ENCODE measurements at regions of chr7 and their contacts with region 1.

Region 1: GRCh38 chr7:135281363-135281949 is 47.8 kb downstream of the STRA8 start:
- DNase-seq: peak; percentile 79
- ATAC-seq: peak; percentile 99
- H3K4me3 ChIP-seq: no peak overlapping the region
- H3K27ac ChIP-seq: no peak overlapping the region
- H3K4me1 ChIP-seq: no peaks in the 10 kb centered on the region; a peak in 1 of 4 replicates
- H3K27me3 ChIP-seq: peaks cover 5% of the 10 kb centered on the region
- CTCF ChIP-seq: peak; percentile 96 to 100 (median 99)
- POLR2A ChIP-seq: no peak
- RAD21 ChIP-seq: peak; percentile 100

Region 2: DNA sequence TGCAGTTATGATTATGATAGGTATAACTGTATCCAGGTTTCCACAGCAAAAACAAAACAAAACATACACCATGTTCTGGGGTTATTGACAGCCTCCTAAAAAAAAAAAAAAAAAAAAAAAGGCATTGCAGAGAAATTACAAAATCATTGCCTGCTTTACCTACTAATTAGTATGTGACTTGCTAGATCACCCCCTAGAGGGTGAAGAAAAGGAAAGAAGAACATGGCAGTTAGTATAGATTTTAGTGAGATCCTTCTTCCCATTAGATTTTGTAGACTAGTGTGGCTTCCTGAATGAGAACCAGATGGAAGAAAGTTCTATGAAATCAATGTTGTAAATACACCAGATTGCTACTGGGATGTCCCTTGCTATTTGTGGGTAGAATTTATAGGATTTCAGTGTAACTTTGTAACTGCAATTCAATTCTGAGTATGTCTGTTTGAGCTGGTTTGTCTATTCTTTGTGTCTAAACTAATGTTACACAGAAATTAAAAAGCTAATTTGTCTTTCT is 319.1 kb before region 1 on chr7:
- CTCF ChIA-PET with region 1: no interaction called
- POLR2A ChIA-PET with region 1: no interaction called
- RAD21 ChIA-PET with region 1: no interaction called
- intact Hi-C with region 1: no loop called
- DNase-seq: no peak
- ATAC-seq: no peak
- H3K4me3 ChIP-seq: no peak overlapping the region
- H3K27ac ChIP-seq: no peak overlapping the region
- H3K4me1 ChIP-seq: no peaks in the 10 kb centered on the region
- H3K27me3 ChIP-seq: no peaks in the 10 kb centered on the region
- CTCF ChIP-seq: peak in 1 of 3 experiments; percentile 16; a peak in 1 of 6 replicates
- POLR2A ChIP-seq: no peak
- RAD21 ChIP-seq: 0 out of 2 replicates have a peak, but pooled peaks have one; percentile 11

Region 3: DNA sequence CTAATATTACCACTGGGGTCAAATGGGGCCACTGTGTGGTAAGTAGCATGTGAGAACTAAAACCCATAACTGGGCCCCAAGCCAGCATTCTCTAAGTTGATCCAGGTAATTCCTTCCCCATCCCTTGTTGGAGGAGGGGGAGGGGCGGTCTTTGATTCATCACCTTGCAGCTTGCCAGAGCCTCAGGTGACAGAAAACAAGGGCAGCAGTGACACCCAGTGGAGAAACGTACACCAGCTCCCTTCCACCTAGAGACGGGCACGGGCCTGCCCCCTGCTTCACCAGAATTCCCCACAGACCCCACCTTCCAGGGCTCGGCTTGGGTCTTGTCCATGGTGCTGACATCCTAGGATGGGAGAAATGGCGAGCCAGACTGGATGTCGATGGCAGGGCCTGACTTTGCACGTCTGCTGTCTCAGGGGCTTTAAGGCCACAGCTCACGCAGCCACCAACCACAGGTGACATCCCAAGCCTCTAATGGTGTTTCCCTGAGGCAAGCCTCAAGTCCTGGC is 54.2 kb after region 1 on chr7:
- CTCF ChIA-PET with region 1: interaction called, 77 read pairs
- POLR2A ChIA-PET with region 1: no interaction called
- RAD21 ChIA-PET with region 1: interaction called, 4 to 14 read pairs
- intact Hi-C with region 1: loop called (anchors 1 kb)
- DNase-seq: peak; percentile 66
- ATAC-seq: peak; percentile 99
- H3K4me3 ChIP-seq: no peak overlapping the region
- H3K27ac ChIP-seq: no peak overlapping the region
- H3K4me1 ChIP-seq: no peaks in the 10 kb centered on the region
- H3K27me3 ChIP-seq: no peaks in the 10 kb centered on the region
- CTCF ChIP-seq: peak; percentile 65 to 96 (median 71)
- POLR2A ChIP-seq: no peak
- RAD21 ChIP-seq: peak; percentile 91

Region 4: GRCh38 chr7:135645296-135645904 is 363.9 kb after region 1 on chr7:
- CTCF ChIA-PET with region 1: interaction called, 20 read pairs
- POLR2A ChIA-PET with region 1: no interaction called
- RAD21 ChIA-PET with region 1: no interaction called
- intact Hi-C with region 1: no loop called
- DNase-seq: peak; percentile 40
- ATAC-seq: peak; percentile 87
- H3K4me3 ChIP-seq: no peak overlapping the region
- H3K27ac ChIP-seq: no peak overlapping the region
- H3K4me1 ChIP-seq: no peaks in the 10 kb centered on the region
- H3K27me3 ChIP-seq: no peaks in the 10 kb centered on the region
- CTCF ChIP-seq: peak; percentile 52 to 76 (median 68); a peak in 5 of 6 replicates
- POLR2A ChIP-seq: no peak
- RAD21 ChIP-seq: peak; percentile 65

Measured in HCT116 (cell line).